ENCODE measurements at regions of chr1 and their contacts with region 1.

Region 1: GRCh38 chr1:178542560-178543356 is 29.8 kb downstream of the TEX35 start:
- DNase-seq: peak; percentile 85 to 96 (median 95)
- ATAC-seq: peak; percentile 93 to 94
- H3K4me3 ChIP-seq: peak overlapping the region; percentile 77
- H3K27ac ChIP-seq: peak overlapping the region; percentile 73
- H3K4me1 ChIP-seq: peaks cover 2% of the 10 kb centered on the region
- H3K27me3 ChIP-seq: no peaks in the 10 kb centered on the region

Region 2: GRCh38 chr1:178354816-178355215 is 187.9 kb before region 1 on chr1:
- intact Hi-C with region 1: no loop called
- DNase-seq: no peak
- ATAC-seq: peak in 1 of 2 donors; percentile 37
- H3K4me3 ChIP-seq: no peak overlapping the region
- H3K27ac ChIP-seq: no peak overlapping the region
- H3K4me1 ChIP-seq: peaks cover 5% of the 10 kb centered on the region
- H3K27me3 ChIP-seq: no peaks in the 10 kb centered on the region

Region 3: DNA sequence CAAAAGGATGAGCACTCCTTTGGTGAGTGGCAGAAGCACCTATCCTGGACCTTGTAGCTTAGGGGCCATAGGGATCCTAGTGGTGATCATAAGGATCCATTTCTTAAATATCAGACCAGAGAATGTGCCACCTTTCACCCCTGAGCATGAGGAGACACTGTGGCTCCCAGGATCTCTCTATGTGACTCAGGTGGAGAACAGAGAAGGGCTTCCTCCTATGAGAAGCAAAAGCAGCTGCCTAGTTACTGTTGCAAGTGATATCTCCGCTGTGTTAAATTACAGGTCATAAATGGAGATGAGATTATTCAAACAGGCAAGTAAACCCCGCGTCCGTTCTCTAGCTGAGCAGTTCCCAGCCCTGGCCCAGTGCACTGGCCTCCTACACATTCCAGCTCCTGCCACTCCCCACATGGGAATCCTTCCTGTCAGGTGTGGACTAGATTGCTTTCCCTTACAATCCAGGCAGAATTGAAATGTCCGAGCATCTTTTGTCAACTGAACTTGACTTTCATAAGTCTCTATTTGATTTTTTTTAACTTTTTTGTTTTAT is 72.3 kb before region 1 on chr1:
- intact Hi-C with region 1: no loop called
- DNase-seq: no peak
- ATAC-seq: no peak
- H3K4me3 ChIP-seq: no peak overlapping the region
- H3K27ac ChIP-seq: no peak overlapping the region
- H3K4me1 ChIP-seq: no peaks in the 10 kb centered on the region
- H3K27me3 ChIP-seq: no peaks in the 10 kb centered on the region

Region 4: GRCh38 chr1:178749581-178750166 is 206.9 kb after region 1 on chr1:
- intact Hi-C with region 1: loop called (anchors 2 to 5 kb)
- DNase-seq: no peak
- ATAC-seq: no peak
- H3K4me3 ChIP-seq: no peak overlapping the region
- H3K27ac ChIP-seq: no peak overlapping the region
- H3K4me1 ChIP-seq: no peaks in the 10 kb centered on the region
- H3K27me3 ChIP-seq: no peaks in the 10 kb centered on the region

Measured in right cardiac atrium (tissue), 5 donors.